WTC11 (cell line): ENCODE measurements at regions of chr7 and their contacts with region 1.

Region 1: GRCh38 chr7:40604601-40605438 is 470.0 kb downstream of the SUGCT start:
- DNase-seq: peak; percentile 74
- ATAC-seq: peak; percentile 98
- H3K4me3 Mint-ChIP-seq: no peak overlapping the region
- H3K27ac Mint-ChIP-seq: no peak overlapping the region
- H3K4me1 Mint-ChIP-seq: peaks cover 12% of the 10 kb centered on the region
- H3K27me3 Mint-ChIP-seq: no peaks in the 10 kb centered on the region
- CTCF ChIP-seq: peak; percentile 47; the same call in 1 of the 2 replicates

Region 2: DNA sequence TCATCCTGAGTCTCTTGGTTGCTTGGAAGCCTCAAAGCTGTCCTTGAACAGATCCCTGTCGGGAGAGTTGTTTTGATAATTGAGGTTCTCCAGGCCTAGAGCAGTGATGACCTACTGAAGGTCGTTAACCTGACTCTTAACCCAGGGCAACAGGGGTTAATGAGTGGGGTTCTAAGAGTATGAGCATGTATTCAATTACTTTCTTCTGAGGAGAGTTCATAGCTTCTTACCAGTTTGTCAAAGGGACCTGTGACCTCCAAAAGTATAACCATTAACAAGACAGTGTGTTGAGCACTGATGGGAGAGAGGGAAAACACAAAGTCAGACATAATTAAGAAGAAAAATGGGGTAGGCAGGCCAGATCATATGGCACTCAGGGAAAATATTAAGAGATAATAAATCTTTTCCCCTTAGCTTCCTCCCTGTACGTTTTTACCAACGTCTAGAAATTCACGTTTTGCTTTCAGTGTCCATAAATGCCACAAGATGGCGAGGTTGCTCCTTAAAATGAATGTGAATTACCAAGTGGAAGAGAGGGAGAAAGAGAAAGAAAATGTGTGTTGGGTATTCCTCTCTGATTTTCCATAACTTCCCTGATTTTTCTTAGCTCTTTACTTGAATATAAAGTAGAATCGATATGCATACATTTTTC is 372.5 kb before region 1 on chr7:
- CTCF ChIA-PET with region 1: interaction called, 19 read pairs
- POLR2A ChIA-PET with region 1: no interaction called
- DNase-seq: no peak
- ATAC-seq: peak; percentile 30; the same call in 1 of the 2 replicates
- H3K4me3 Mint-ChIP-seq: no peak overlapping the region
- H3K27ac Mint-ChIP-seq: no peak overlapping the region
- H3K4me1 Mint-ChIP-seq: peaks cover 10% of the 10 kb centered on the region
- H3K27me3 Mint-ChIP-seq: no peaks in the 10 kb centered on the region; the same call in 1 of the 2 replicates
- CTCF ChIP-seq: no peak

Region 3: GRCh38 chr7:40507166-40507565 is 97.7 kb before region 1 on chr7:
- CTCF ChIA-PET with region 1: interaction called, 55 read pairs
- POLR2A ChIA-PET with region 1: no interaction called
- DNase-seq: no peak
- ATAC-seq: peak; percentile 87
- H3K4me3 Mint-ChIP-seq: no peak overlapping the region
- H3K27ac Mint-ChIP-seq: no peak overlapping the region
- H3K4me1 Mint-ChIP-seq: peaks cover 2% of the 10 kb centered on the region; the same call in 1 of the 2 replicates
- H3K27me3 Mint-ChIP-seq: no peaks in the 10 kb centered on the region
- CTCF ChIP-seq: 0 out of 2 replicates have a peak, but pooled peaks have one; percentile 9

Region 4: DNA sequence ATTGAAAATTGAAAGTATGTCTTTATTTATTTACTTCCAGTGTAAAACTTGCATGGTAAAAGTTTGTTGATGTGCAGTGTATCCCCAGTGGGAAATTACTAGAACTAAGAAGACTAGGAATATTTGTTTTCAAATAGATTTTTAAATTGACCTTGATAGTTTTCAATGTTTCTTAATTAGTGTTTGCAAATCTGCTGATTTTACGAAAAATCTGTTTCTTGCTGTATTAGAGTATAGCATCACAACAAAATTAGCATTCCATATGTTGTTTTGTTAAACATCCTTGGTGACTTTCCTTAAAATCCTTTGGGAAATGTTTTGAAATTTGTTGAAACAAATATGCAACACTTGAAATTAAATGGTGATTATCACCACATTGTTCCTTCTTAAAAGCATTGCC is 44.1 kb before region 1 on chr7:
- CTCF ChIA-PET with region 1: no interaction called
- POLR2A ChIA-PET with region 1: no interaction called
- DNase-seq: no peak
- ATAC-seq: no peak
- H3K4me3 Mint-ChIP-seq: no peak overlapping the region
- H3K27ac Mint-ChIP-seq: no peak overlapping the region
- H3K4me1 Mint-ChIP-seq: no peaks in the 10 kb centered on the region
- H3K27me3 Mint-ChIP-seq: no peaks in the 10 kb centered on the region; the same call in 1 of the 2 replicates
- CTCF ChIP-seq: no peak

Region 5: GRCh38 chr7:40733578-40733977 is 128.8 kb after region 1 on chr7:
- CTCF ChIA-PET with region 1: no interaction called
- POLR2A ChIA-PET with region 1: no interaction called
- DNase-seq: no peak
- ATAC-seq: no peak
- H3K4me3 Mint-ChIP-seq: no peak overlapping the region
- H3K27ac Mint-ChIP-seq: no peak overlapping the region
- H3K4me1 Mint-ChIP-seq: no peaks in the 10 kb centered on the region
- H3K27me3 Mint-ChIP-seq: no peaks in the 10 kb centered on the region; the same call in 1 of the 2 replicates
- CTCF ChIP-seq: no peak